Heart right ventricle (tissue), 16 donors: ENCODE measurements at regions of chr7 and their contacts with region 1.

Region 1: GRCh38 chr7:114988755-114989375 is 67.0 kb downstream of the MDFIC start:
- DNase-seq: peak; percentile 54 to 71
- ATAC-seq: peak; percentile 33 to 91 (median 77)
- H3K4me3 ChIP-seq: peak overlapping the region in 1 of 10 donors; percentile 19
- H3K27ac ChIP-seq: peak overlapping the region in 9 of 10 donors; percentile 60 to 83 (median 66)
- H3K4me1 ChIP-seq: peaks cover 8 to 66% (median 50%) of the 10 kb centered on the region in 9 donors
- H3K27me3 ChIP-seq: no peaks in the 10 kb centered on the region
- CTCF ChIP-seq: no peak

Region 2: GRCh38 chr7:113799896-113800295 is 1189.0 kb before region 1 on chr7:
- intact Hi-C with region 1: no loop called
- DNase-seq: no peak
- ATAC-seq: no peak
- H3K4me3 ChIP-seq: no peak overlapping the region
- H3K27ac ChIP-seq: no peak overlapping the region
- H3K4me1 ChIP-seq: no peaks in the 10 kb centered on the region
- H3K27me3 ChIP-seq: no peaks in the 10 kb centered on the region
- CTCF ChIP-seq: no peak

Region 3: DNA sequence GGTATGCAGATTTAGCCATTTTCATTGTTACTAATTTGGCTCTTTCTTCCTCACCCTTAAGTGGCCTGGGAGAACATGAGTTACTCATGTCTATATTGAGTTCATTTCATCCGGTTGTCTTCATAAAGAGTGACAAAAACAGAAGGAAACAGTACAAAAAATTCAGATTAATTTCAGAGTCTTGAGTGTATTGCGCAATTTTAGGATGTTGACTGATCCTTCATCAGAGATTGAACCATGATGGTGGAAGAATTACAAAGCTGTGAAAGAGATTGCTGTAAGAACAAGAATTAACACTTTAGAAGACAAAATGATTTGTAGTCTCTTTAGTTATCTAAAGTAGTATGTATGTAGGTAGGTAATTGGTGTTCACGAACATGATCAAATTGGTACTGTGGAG is 876.1 kb before region 1 on chr7:
- intact Hi-C with region 1: no loop called
- DNase-seq: no peak
- ATAC-seq: no peak
- H3K4me3 ChIP-seq: no peak overlapping the region
- H3K27ac ChIP-seq: peak overlapping the region in 1 of 10 donors; percentile 14
- H3K4me1 ChIP-seq: peaks cover 0 to 3% (median 0%) of the 10 kb centered on the region in 9 donors
- H3K27me3 ChIP-seq: no peaks in the 10 kb centered on the region
- CTCF ChIP-seq: no peak

Region 4: GRCh38 chr7:114930829-114931655 is 57.8 kb before region 1 on chr7:
- intact Hi-C with region 1: loop called in 5 of 10 experiments (anchors 5 to 10 kb)
- DNase-seq: no peak
- ATAC-seq: no peak
- H3K4me3 ChIP-seq: peak overlapping the region in 1 of 10 donors; percentile 13
- H3K27ac ChIP-seq: peak overlapping the region in 5 of 10 donors; percentile 13 to 80 (median 23)
- H3K4me1 ChIP-seq: peaks cover 0 to 98% (median 64%) of the 10 kb centered on the region in 9 donors
- H3K27me3 ChIP-seq: no peaks in the 10 kb centered on the region
- CTCF ChIP-seq: no peak

Region 5: DNA sequence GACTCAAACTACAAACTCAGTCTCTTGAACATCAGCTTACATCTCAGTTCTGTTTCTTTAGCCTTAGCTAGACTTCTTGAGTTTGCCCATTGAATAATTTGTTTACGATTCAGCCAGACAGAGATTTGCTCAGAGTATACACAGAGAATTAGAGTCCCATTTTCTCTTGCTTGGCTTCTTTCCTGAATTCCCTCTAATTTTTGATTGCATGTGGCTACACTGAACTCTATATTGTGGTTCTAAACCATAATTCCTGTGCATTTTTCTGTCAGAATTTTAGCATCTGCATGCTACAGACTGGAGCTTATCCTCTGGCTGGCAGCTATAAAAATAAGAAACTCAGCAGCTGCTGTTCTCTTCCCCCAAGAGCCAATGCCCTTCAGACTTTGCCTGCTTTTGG is 287.9 kb after region 1 on chr7:
- intact Hi-C with region 1: no loop called
- DNase-seq: no peak
- ATAC-seq: no peak
- H3K4me3 ChIP-seq: no peak overlapping the region
- H3K27ac ChIP-seq: no peak overlapping the region
- H3K4me1 ChIP-seq: no peaks in the 10 kb centered on the region
- H3K27me3 ChIP-seq: no peaks in the 10 kb centered on the region
- CTCF ChIP-seq: no peak